ENCODE measurements at regions of chr11 and their contacts with region 1.

Region 1: DNA sequence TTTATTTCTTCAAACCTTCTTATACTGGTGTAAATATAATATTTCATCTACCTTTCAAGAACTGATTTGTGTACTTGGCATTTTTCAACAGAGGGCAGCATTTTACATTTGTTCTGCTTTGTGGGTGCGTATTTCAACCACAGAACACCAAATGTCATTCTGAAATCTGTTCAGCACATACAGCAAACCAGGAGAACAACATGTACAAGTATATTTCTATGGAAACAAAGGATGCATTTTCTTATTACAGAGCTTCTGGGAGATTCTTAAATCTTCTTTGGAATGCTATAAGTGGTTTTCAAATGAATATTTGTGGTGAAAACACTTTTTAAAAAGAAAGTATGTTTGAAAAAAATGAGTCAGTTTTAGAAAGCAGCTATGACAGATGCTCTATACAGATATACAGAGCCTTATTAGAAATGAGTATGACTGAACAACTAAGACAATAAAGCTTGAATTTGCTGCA is 946.0 kb downstream of the FAM181B start:
- DNase-seq: peak in 7 of 9 donors; percentile 11 to 54 (median 46)
- ATAC-seq: peak; percentile 48
- H3K4me3 ChIP-seq: no peak overlapping the region
- H3K4me3 Mint-ChIP-seq: no peak overlapping the region
- H3K27ac ChIP-seq: no peak overlapping the region
- H3K27ac Mint-ChIP-seq: peak overlapping the region in 1 of 9 donors; percentile 51
- H3K4me1 ChIP-seq: peaks cover 0 to 7% of the 10 kb centered on the region in 2 donors
- H3K4me1 Mint-ChIP-seq: peaks cover under 1 to 16% (median 9%) of the 10 kb centered on the region in 7 donors
- H3K27me3 ChIP-seq: no peaks in the 10 kb centered on the region
- H3K27me3 Mint-ChIP-seq: no peaks in the 10 kb centered on the region

Region 2: GRCh38 chr11:81596704-81597103 is 190.9 kb before region 1 on chr11:
- CTCF ChIA-PET with region 1: no interaction called
- POLR2A ChIA-PET with region 1: no interaction called
- intact Hi-C with region 1: no loop called
- DNase-seq: no peak
- ATAC-seq: no peak
- H3K4me3 ChIP-seq: no peak overlapping the region
- H3K4me3 Mint-ChIP-seq: no peak overlapping the region
- H3K27ac ChIP-seq: no peak overlapping the region
- H3K27ac Mint-ChIP-seq: no peak overlapping the region
- H3K4me1 ChIP-seq: no peaks in the 10 kb centered on the region
- H3K4me1 Mint-ChIP-seq: no peaks in the 10 kb centered on the region
- H3K27me3 ChIP-seq: no peaks in the 10 kb centered on the region
- H3K27me3 Mint-ChIP-seq: no peaks in the 10 kb centered on the region

Region 3: GRCh38 chr11:81804858-81805257 is 17.2 kb after region 1 on chr11:
- CTCF ChIA-PET with region 1: no interaction called
- POLR2A ChIA-PET with region 1: no interaction called
- intact Hi-C with region 1: loop called in 1 of 2 experiments (anchors 1 kb)
- DNase-seq: no peak
- ATAC-seq: no peak
- H3K4me3 ChIP-seq: no peak overlapping the region
- H3K4me3 Mint-ChIP-seq: no peak overlapping the region
- H3K27ac ChIP-seq: no peak overlapping the region
- H3K27ac Mint-ChIP-seq: no peak overlapping the region
- H3K4me1 ChIP-seq: no peaks in the 10 kb centered on the region
- H3K4me1 Mint-ChIP-seq: peaks cover 0 to 12% (median 0%) of the 10 kb centered on the region in 7 donors
- H3K27me3 ChIP-seq: no peaks in the 10 kb centered on the region
- H3K27me3 Mint-ChIP-seq: no peaks in the 10 kb centered on the region

Region 4: DNA sequence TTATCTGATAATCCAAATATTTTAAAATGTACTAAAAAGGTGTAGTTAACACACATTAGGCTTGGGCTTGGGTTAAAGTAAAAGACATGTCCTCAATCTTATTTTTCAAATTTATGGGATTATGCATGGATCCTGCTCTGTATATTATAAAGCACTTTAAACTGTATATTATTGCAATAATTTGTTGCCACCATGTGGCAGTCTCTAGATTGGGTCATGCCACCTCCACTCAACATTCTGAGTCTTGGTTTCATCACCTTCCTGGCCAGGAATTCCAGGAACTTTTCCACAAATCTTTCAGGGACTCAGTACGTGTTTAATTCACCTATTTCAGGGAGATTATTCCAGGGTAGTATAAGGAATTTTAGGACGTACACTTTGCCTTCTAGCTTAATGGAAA is 250.5 kb after region 1 on chr11:
- CTCF ChIA-PET with region 1: interaction called, 5 read pairs
- POLR2A ChIA-PET with region 1: no interaction called
- intact Hi-C with region 1: loop called (anchors 1 to 2 kb)
- DNase-seq: no peak
- ATAC-seq: no peak
- H3K4me3 ChIP-seq: no peak overlapping the region
- H3K4me3 Mint-ChIP-seq: no peak overlapping the region
- H3K27ac ChIP-seq: no peak overlapping the region
- H3K27ac Mint-ChIP-seq: no peak overlapping the region
- H3K4me1 ChIP-seq: no peaks in the 10 kb centered on the region
- H3K4me1 Mint-ChIP-seq: no peaks in the 10 kb centered on the region
- H3K27me3 ChIP-seq: no peaks in the 10 kb centered on the region
- H3K27me3 Mint-ChIP-seq: no peaks in the 10 kb centered on the region

Region 5: GRCh38 chr11:82174610-82175009 is 387.0 kb after region 1 on chr11:
- CTCF ChIA-PET with region 1: no interaction called
- POLR2A ChIA-PET with region 1: no interaction called
- intact Hi-C with region 1: loop called in 1 of 2 experiments (anchors 10 kb)
- DNase-seq: no peak
- ATAC-seq: no peak
- H3K4me3 ChIP-seq: no peak overlapping the region
- H3K4me3 Mint-ChIP-seq: no peak overlapping the region
- H3K27ac ChIP-seq: no peak overlapping the region
- H3K27ac Mint-ChIP-seq: no peak overlapping the region
- H3K4me1 ChIP-seq: no peaks in the 10 kb centered on the region
- H3K4me1 Mint-ChIP-seq: no peaks in the 10 kb centered on the region
- H3K27me3 ChIP-seq: no peaks in the 10 kb centered on the region
- H3K27me3 Mint-ChIP-seq: peaks cover 0 to 7% (median 0%) of the 10 kb centered on the region in 5 donors